ENCODE measurements at regions of chr7 and their contacts with region 1.

Region 1: GRCh38 chr7:44606450-44607254 is at the start of gene OGDH:
- DNase-seq: peak; percentile 99
- ATAC-seq: peak; percentile 98
- H3K4me3 Mint-ChIP-seq: peak within 1 kb of the TSS; percentile 99
- H3K27ac Mint-ChIP-seq: peak within 1 kb of the TSS; percentile 100
- H3K4me1 Mint-ChIP-seq: peaks cover 32% of the 10 kb centered on the region
- H3K27me3 Mint-ChIP-seq: peaks cover 11% of the 10 kb centered on the region
- total RNA-seq, gene OGDH: 99.6 to 103 TPM

Region 2: DNA sequence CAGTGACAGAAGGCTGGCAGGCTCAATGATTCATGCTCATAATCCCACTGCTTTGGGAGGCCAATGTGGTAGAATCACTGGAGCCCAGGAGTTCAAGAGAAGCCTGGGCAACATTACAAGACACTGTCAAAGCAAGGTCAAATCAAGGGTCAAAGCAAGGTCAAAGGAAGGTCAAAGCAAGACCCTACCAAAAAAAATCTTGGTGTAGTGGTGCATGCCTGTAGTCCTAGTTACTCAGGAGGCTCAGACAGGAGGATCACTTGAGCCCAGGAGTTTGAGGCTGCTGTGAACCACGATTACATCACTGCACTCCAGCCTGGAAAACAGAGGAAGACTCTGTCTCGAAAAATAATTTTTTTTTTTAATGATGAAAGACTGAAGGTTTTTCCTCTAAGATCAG is 51.3 kb before region 1 on chr7:
- POLR2A ChIA-PET with region 1: no interaction called
- DNase-seq: no peak
- ATAC-seq: no peak
- H3K4me3 Mint-ChIP-seq: no peak overlapping the region
- H3K27ac Mint-ChIP-seq: no peak overlapping the region
- H3K4me1 Mint-ChIP-seq: no peaks in the 10 kb centered on the region
- H3K27me3 Mint-ChIP-seq: peaks cover 14% of the 10 kb centered on the region

Region 3: GRCh38 chr7:44581879-44582603 is 24.6 kb before region 1 on chr7 and contains the start of gene TMED4:
- POLR2A ChIA-PET with region 1: interaction called, 12 read pairs
- DNase-seq: peak; percentile 100
- ATAC-seq: peak; percentile 93
- H3K4me3 Mint-ChIP-seq: peak within 1 kb of the TSS; percentile 93
- H3K27ac Mint-ChIP-seq: peak within 1 kb of the TSS; percentile 95
- H3K4me1 Mint-ChIP-seq: peaks cover 22% of the 10 kb centered on the region
- H3K27me3 Mint-ChIP-seq: peaks cover 7% of the 10 kb centered on the region
- total RNA-seq, gene TMED4: 91.4 to 94.3 TPM

Region 4: GRCh38 chr7:44622307-44623151 is 15.9 kb after region 1 on chr7:
- POLR2A ChIA-PET with region 1: interaction called, 12 read pairs
- DNase-seq: no peak
- ATAC-seq: peak; percentile 80
- H3K4me3 Mint-ChIP-seq: peak overlapping the region; percentile 58
- H3K27ac Mint-ChIP-seq: peak overlapping the region; percentile 92
- H3K4me1 Mint-ChIP-seq: peaks cover 50% of the 10 kb centered on the region
- H3K27me3 Mint-ChIP-seq: no peaks in the 10 kb centered on the region

Region 5: GRCh38 chr7:44633254-44634186 is 26.9 kb after region 1 on chr7:
- POLR2A ChIA-PET with region 1: interaction called, 104 read pairs
- DNase-seq: no peak
- ATAC-seq: peak; percentile 6
- H3K4me3 Mint-ChIP-seq: no peak overlapping the region
- H3K27ac Mint-ChIP-seq: peak overlapping the region; percentile 73
- H3K4me1 Mint-ChIP-seq: peaks cover 72% of the 10 kb centered on the region
- H3K27me3 Mint-ChIP-seq: no peaks in the 10 kb centered on the region

Region 6: GRCh38 chr7:44638611-44639557 is 32.2 kb after region 1 on chr7:
- POLR2A ChIA-PET with region 1: interaction called, 104 read pairs
- DNase-seq: peak; percentile 78
- ATAC-seq: peak; percentile 86
- H3K4me3 Mint-ChIP-seq: peak overlapping the region; percentile 86
- H3K27ac Mint-ChIP-seq: peak overlapping the region; percentile 99
- H3K4me1 Mint-ChIP-seq: peaks cover 58% of the 10 kb centered on the region
- H3K27me3 Mint-ChIP-seq: no peaks in the 10 kb centered on the region

Region 7: DNA sequence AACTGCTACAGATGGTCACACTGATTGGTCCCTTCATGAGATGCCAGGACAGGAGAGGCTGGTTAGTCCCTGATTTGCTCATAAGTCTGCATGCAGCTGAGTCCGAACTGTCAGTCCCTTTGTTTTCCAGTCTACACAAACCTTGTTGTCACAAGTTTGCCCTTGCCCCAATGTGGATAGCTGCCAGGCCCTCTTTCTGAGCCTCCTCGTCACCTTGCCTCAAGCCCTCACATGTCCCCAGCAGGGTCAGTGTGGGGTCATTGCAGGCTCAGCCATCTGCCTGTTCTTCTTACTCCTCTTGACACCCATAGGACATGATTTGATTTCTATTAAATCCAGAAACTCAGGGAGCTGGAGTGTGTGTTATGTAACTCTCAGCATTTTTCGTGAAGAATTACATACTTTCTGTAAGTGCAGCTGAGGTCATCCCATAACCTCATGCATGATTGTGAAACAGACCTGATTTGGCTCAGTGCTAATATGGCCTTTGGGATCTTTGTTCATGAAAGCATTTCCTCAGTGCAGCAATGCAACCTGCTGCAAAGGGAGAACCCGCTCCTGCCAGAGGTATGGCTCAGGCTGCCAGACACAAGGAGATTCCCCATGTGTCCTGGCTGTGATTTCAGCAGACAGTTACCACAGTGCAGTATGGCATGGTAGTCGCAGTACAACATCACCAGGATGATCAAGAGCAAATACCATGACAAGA is 72.0 kb after region 1 on chr7:
- POLR2A ChIA-PET with region 1: no interaction called
- DNase-seq: no peak
- ATAC-seq: no peak
- H3K4me3 Mint-ChIP-seq: no peak overlapping the region
- H3K27ac Mint-ChIP-seq: no peak overlapping the region
- H3K4me1 Mint-ChIP-seq: no peaks in the 10 kb centered on the region
- H3K27me3 Mint-ChIP-seq: no peaks in the 10 kb centered on the region

Region 8: DNA sequence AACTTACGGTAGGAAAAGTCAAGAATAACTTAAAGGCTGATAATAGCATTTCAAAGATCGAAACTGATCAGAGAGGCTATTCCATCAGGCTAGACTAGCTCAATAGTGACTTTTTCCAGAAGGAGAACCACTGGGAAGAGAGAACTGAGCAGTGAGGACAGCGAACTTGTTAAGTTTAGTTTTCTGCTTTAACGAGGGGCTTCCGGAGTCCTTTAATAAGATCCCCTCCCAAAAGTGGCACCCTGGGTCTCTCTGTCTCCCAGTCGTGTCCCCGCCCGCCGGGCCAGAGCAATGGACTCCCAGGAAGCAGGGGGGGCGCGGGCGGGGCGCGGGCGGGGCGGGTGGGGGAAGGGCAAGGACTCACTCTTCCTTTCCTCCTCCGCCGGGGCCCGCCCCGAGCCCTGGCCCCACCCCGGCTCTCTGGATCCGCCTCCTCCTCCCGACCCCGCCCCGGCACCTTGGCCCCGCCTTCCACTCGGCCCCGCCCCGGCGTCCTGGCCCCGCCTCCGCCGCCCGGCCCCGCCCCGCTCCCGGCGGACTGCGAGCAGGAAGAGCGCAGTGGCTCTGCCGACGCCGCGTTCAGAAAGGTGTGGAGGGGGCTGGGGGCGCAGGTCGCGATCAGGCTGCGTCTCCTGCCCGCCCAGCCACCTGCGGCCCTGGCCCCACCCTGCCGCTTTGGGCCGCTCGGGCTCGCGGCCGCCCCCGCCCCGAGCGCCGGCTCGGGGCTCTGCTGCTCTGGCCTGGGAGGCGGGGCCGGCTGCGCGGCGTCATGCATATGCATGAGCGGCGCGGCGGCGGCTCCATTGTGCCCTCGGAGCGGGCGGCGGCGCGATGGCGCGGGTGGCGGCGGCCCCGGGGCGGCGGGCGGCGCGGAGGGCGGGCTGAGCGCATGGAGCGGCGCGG is 141.6 kb after region 1 on chr7 and contains the start of gene ZMIZ2:
- POLR2A ChIA-PET with region 1: interaction called, 25 read pairs
- DNase-seq: peak; percentile 98
- ATAC-seq: peak; percentile 86
- H3K4me3 Mint-ChIP-seq: peak within 1 kb of the TSS; percentile 83
- H3K27ac Mint-ChIP-seq: peak within 1 kb of the TSS; percentile 88
- H3K4me1 Mint-ChIP-seq: peaks cover 34% of the 10 kb centered on the region
- H3K27me3 Mint-ChIP-seq: no peaks in the 10 kb centered on the region
- total RNA-seq, gene ZMIZ2: 120 to 124 TPM

Measured in activated naive CD8-positive, alpha-beta T cell treated with anti-CD3 and anti-CD28 coated beads, Interleukin-2, amount 10 ng/mL, durations not matched to agents 7 days and 5 days (primary cell).